Activated naive CD4-positive, alpha-beta T cell treated with anti-CD3 and anti-CD28 coated beads for 36 hours (primary cell): ENCODE measurements at regions of chr1 and their contacts with region 1.

Region 1: GRCh38 chr1:182084487-182085316 is 23.2 kb upstream of the ZNF648 start:
- DNase-seq: peak; percentile 93
- H3K4me3 Mint-ChIP-seq: no peak overlapping the region
- H3K27ac Mint-ChIP-seq: peak overlapping the region; percentile 25
- H3K4me1 Mint-ChIP-seq: peaks cover 40% of the 10 kb centered on the region
- H3K27me3 Mint-ChIP-seq: no peaks in the 10 kb centered on the region

Region 2: DNA sequence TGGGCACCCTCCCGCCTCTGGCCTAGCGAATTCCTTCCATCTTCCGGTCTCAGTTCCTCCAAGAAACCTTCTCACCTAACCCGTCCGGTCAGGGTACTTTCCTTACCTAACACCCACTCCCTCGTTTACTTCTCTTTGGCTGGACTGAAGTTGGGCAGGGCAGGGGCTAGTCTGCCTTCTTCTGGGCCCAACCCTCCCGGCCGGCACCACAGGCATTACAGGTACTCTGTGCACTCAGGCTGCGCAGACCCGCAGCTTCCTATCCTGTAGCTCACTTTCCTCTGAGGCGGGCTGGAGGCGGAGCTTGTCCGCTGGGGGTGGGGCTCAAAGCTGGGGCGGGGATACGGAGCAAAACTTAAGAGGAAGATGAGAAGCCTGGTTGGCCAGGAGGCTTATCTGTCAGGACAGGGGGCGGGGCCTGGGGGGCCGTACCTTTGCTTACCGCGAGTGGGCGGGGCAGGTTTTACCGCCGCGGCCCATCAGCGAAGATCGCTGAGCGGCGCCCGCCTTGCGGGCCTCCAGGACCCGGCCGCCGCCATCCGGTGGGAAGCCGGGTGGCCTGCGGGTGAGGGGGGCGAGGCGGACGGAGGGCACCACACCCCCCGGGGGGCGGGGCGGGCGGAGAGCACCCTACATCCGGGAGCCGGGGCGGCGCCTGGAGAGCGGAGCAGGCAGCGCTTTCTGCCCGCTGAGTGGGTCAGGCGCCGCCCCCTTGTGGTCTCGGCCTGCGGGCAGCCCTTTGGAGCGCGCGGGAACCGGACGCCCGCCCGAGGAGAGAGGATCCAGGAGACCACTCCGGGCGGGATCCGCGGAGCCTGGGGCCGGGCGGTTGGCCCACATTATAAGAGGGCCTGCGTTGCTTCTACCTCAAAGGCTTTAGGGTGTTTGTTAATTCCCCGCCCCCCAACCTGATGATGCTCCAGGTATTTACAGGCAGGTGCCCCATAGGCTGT is 55.0 kb before region 1 on chr1:
- CTCF ChIA-PET with region 1: interaction called, 6 read pairs
- intact Hi-C with region 1: loop called (anchors 2 kb)
- DNase-seq: peak; percentile 99
- H3K4me3 Mint-ChIP-seq: peak overlapping the region; percentile 95
- H3K27ac Mint-ChIP-seq: peak overlapping the region; percentile 95
- H3K4me1 Mint-ChIP-seq: peaks cover 9% of the 10 kb centered on the region
- H3K27me3 Mint-ChIP-seq: no peaks in the 10 kb centered on the region

Region 3: GRCh38 chr1:182143154-182143657 is 58.5 kb after region 1 on chr1:
- CTCF ChIA-PET with region 1: interaction called, 50 read pairs
- intact Hi-C with region 1: loop called (anchors 1 kb)
- DNase-seq: peak; percentile 95
- H3K4me3 Mint-ChIP-seq: no peak overlapping the region
- H3K27ac Mint-ChIP-seq: no peak overlapping the region
- H3K4me1 Mint-ChIP-seq: peaks cover 11% of the 10 kb centered on the region
- H3K27me3 Mint-ChIP-seq: no peaks in the 10 kb centered on the region

Region 4: GRCh38 chr1:182391362-182392044 is 306.8 kb after region 1 on chr1 and contains the start of gene GLUL:
- CTCF ChIA-PET with region 1: interaction called, 106 read pairs
- intact Hi-C with region 1: loop called (anchors 1 kb)
- DNase-seq: peak; percentile 76
- H3K4me3 Mint-ChIP-seq: peak within 1 kb of the TSS; percentile 87
- H3K27ac Mint-ChIP-seq: peak within 1 kb of the TSS; percentile 72
- H3K4me1 Mint-ChIP-seq: peaks cover 18% of the 10 kb centered on the region
- H3K27me3 Mint-ChIP-seq: no peaks in the 10 kb centered on the region
- total RNA-seq, gene GLUL: 71.5 to 73.1 TPM

Region 5: DNA sequence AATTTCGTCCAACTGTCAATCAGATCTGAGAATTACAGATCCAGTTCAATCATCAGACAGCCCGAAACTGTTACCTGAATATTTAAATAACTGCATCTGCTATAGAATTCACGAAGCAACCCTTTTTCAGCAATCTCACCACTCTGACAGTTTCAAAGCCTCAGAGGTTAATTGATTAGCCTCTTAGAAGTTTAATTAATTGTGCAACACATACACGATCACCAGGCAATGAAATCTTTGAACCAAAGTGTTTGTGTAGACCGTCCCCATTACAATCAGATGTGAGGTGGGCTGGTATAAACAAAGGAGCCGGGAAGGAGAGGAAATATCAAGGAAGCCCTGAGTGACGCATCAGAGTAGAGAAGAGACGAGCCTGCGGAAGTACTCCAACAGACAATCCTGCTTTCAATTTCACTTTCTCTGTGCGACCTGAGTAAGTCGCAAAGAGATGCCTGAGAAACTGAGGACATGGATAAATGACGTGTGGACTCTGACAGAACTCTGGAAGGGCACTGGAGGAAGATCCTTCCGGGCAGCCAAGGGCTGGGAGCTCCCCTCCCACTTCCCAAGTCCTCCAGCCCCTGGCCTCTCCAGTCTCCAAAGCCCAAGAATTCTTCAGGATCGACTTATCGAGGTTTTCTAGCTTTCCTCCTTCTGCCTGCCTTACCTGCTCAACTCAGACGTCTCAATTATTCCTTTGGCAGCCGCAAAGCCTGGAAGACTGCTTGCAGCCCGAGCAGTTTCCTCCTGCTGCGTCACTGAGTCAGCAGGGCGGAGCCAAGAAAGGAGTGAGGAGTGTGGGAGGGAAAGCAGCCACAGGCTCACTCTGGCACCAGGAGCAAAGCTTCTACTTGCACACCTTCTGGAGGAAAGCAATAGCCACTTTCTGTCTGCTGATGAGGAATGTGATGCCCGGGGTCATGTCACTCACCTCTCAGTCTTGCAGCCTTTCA is 504.1 kb after region 1 on chr1 and contains the start of gene RNASEL:
- CTCF ChIA-PET with region 1: interaction called, 3 read pairs
- intact Hi-C with region 1: loop called (anchors 2 kb)
- DNase-seq: peak; percentile 62
- H3K4me3 Mint-ChIP-seq: peak within 1 kb of the TSS; percentile 86
- H3K27ac Mint-ChIP-seq: peak within 1 kb of the TSS; percentile 98
- H3K4me1 Mint-ChIP-seq: peaks cover 49% of the 10 kb centered on the region
- H3K27me3 Mint-ChIP-seq: no peaks in the 10 kb centered on the region
- total RNA-seq, gene RNASEL: 2.5 TPM